Activated CD8-positive, alpha-beta T cell treated with anti-CD3 and anti-CD28 coated beads, Interleukin-2, amount 10 ng/mL, durations not matched to agents 7 days and 5 days (primary cell): ENCODE measurements at regions of chr4 and their contacts with region 1.

Region 1: DNA sequence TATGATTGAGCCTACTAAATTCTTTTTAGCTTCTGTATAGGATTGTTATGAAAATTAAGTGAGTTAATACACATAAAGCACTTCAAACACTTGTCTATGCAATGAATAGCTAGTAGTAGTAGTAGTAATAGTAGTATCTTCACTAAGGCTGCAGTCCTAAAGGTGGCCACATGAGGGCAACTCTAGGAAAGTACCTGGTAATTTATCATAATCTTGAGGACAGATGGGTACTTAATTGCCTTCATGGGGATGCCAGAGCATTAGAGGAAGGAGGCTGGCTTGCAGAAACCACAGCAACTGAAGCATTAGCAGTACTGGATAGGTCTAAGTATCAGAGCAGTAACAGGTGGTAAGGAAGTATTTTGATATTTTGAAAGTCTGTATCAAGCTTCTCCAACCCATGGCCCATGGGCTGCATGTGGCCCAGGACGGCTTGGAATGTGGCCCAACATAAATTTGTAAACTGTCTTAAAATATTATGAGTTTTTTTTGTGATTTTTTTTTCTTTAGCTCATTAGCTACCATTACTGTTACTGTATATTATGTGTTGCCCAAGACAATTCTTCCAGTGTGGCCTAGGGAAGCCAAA is 17.3 kb downstream of the NIPAL1 start:
- DNase-seq: peak; percentile 79
- ATAC-seq: peak; percentile 80
- H3K4me3 Mint-ChIP-seq: no peak overlapping the region
- H3K27ac Mint-ChIP-seq: no peak overlapping the region
- H3K4me1 Mint-ChIP-seq: peaks cover 21% of the 10 kb centered on the region
- H3K27me3 Mint-ChIP-seq: peaks cover 3% of the 10 kb centered on the region

Region 2: DNA sequence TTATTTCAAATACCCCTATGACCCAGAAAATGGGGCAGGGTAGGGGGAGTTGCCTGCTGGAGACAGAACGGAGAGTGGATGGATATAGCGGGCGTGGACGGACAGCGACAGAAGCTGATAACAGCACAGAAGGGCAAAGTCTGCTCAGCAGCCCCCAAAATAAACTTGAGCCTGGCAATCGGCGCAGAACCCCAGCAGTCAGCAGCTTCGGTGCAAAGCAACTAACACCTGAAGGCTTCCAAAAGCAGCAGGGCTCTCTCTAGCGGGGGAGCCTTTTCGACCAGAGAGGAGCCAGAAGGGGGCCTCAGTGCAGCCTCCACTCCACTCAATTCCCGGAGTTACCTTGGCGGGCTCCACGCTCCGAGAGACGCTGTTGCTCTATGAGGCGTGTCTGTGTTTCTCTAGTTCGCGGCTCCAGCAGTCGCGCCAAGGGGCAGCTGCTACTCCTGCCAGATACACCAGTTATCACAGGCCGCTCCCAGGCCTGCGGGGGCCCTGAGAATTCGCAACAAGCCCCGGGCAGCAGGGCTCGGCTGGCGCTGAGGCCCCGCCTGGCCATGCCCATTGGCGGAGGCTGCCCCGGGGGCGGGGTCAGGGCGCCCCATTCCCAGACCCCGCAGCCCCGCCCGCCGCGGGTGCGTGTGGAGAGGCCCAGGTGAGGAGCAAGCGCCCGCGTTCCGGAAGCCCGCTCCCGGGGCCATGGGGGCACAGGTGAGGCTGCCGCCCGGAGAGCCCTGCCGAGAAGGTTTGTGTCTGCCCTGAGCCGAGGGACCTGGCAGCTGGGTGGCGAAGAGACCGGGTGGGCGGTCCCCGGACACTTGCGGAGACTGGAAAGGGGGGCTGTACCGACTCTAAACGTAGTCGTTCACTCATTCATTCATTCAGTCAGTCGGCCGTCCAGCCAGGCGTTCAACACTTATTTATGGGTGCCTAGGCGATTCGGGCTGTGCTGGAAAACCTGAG is 17.5 kb before region 1 on chr4 and contains the starts of genes CNGA1 and NIPAL1:
- CTCF ChIA-PET with region 1: interaction called, 11 read pairs
- POLR2A ChIA-PET with region 1: no interaction called
- DNase-seq: peak; percentile 66
- ATAC-seq: peak; percentile 95
- H3K4me3 Mint-ChIP-seq: peak within 1 kb of the TSS; percentile 76
- H3K27ac Mint-ChIP-seq: no peak within 1 kb of the TSS
- H3K4me1 Mint-ChIP-seq: peaks cover 9% of the 10 kb centered on the region
- H3K27me3 Mint-ChIP-seq: peaks cover 21% of the 10 kb centered on the region
- total RNA-seq, gene CNGA1: not detected
- total RNA-seq, gene NIPAL1: 1.1 TPM

Region 3: DNA sequence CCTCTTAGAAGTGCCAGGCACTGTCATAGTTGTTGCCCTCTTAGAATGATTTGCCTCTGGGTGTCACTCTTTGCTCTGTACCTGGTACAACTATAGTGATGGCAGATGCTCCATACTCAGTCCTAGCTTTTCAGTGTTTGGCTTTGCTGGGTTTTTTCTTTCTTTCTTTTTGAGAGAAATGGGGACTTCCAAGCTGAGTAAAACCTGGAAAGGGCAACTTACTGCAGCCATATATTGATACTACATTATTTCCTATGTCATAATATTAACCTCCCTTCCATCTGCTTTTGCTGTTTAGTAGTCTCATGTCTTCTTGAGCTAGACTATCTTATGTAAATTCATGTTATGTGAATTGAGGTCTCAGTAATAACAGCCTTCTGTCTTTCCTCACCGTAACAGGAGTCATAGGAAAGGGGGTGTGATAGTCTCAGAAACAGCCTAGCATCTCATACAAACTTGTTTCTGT is 31.7 kb after region 1 on chr4:
- CTCF ChIA-PET with region 1: interaction called, 13 read pairs
- POLR2A ChIA-PET with region 1: no interaction called
- DNase-seq: no peak
- ATAC-seq: no peak
- H3K4me3 Mint-ChIP-seq: no peak overlapping the region
- H3K27ac Mint-ChIP-seq: no peak overlapping the region
- H3K4me1 Mint-ChIP-seq: peaks cover 23% of the 10 kb centered on the region
- H3K27me3 Mint-ChIP-seq: no peaks in the 10 kb centered on the region

Region 4: DNA sequence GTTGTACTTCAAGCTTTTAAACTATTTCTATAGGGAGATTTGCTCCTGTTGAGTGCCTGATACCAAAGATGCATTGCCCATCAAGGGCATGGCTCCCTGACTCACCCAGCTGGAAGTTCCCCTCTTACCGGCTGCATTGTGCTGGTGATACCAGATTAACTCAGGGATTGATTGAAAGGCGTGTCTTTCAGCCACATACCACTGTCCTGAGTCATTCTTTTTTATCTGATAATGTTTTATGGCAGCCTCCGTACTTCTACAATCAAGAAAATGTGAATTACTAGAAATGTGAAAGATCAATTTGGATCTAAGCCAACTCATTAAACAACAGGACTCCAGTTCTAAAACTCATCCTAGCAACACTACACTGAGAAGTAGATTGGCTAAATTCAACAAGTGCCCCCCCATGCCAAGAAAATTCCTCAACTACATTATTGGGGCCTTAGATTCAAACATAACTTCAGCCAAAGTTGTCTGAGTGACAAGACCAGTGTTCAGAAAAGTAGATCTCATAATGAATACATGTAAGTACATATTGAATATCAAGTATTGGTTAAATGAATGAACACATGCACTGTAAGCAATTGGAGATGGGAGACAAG is 60.1 kb after region 1 on chr4:
- CTCF ChIA-PET with region 1: interaction called, 10 read pairs
- POLR2A ChIA-PET with region 1: no interaction called
- DNase-seq: no peak
- ATAC-seq: no peak
- H3K4me3 Mint-ChIP-seq: no peak overlapping the region
- H3K27ac Mint-ChIP-seq: no peak overlapping the region
- H3K4me1 Mint-ChIP-seq: no peaks in the 10 kb centered on the region
- H3K27me3 Mint-ChIP-seq: no peaks in the 10 kb centered on the region

Region 5: DNA sequence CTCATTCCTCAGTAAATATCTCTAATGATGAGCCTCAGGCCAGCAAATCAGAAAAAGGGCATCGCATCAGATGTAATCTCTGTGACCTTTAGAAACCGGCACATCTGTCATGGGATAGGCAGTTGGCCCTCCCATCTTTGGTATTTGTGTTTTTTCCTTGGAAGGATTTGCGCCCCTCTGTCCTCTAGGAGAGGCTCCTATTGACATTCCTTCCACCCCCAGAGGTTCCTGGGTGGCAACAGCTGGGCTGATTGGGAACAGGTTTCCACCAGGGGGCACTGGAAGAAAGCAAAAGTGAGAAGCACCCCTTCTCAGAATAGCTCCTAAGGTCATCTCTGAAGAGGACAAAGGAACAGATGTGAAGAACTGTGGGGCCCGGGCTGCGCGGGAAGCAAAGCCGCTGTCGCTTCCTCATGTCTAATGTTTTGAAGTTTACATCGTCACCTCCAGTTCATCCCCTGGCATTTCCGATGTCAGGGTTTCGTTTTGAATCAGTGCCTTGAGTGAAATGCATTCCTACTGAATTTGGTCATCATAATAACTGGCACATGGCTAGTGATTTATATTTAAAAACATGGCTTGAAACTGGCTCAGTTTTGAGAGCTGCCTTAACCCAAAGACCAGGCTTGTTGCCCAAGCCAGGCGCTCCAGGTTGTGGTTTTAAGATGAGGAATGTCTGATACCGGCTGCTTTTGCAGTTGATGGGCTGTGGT is 93.9 kb after region 1 on chr4:
- CTCF ChIA-PET with region 1: interaction called, 10 read pairs
- POLR2A ChIA-PET with region 1: no interaction called
- DNase-seq: peak; percentile 93
- ATAC-seq: peak; percentile 81
- H3K4me3 Mint-ChIP-seq: peak overlapping the region; percentile 90
- H3K27ac Mint-ChIP-seq: peak overlapping the region; percentile 92
- H3K4me1 Mint-ChIP-seq: peaks cover 85% of the 10 kb centered on the region
- H3K27me3 Mint-ChIP-seq: no peaks in the 10 kb centered on the region